Caco-2 (cell line): ENCODE measurements at regions of chr6 and their contacts with region 1.

Region 1: DNA sequence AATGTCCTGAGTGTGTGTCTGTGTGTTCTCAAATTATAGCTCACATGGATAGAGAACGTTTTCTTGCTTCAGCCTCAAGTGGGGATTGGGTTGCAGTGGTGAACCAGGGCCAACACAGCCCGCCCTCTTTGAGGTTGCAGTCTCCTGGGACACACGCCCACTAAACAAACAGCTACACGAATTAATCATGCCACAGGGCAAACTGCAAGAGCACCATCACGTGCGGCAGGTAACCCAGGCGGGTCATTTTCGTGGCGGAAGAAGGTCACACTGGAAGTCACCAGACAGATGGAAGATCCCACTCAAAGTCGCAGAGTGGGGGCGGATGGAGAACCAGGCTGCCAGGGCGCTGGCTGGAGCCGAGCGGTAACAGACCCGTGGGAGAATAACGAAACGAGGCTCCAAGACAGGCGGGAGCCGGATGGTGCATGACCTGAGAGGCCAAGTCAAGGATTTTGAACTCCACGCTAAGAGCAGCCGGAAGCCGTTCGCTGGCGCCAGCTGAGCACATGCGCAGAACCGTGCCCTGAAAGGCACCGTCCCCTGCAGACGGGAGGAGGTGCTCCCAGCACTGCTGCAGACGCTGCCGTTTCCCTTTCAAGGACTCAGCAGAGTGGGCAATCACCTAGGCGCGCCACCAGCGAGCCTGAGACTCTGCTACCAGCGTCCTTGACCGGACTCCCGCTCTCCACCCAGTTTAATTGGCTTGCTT is 10.7 kb downstream of the DLL1 start:
- DNase-seq: peak; percentile 79 to 82
- H3K4me3 ChIP-seq: peak overlapping the region; percentile 32
- H3K4me3 Mint-ChIP-seq: peak overlapping the region; percentile 76
- H3K27ac Mint-ChIP-seq: peak overlapping the region; percentile 67
- H3K4me1 ChIP-seq: 0 out of 2 replicates have a peak, but pooled peaks cover 4% of the 10 kb centered on the region
- H3K4me1 Mint-ChIP-seq: peaks cover 5% of the 10 kb centered on the region
- H3K27me3 ChIP-seq: no peaks in the 10 kb centered on the region
- H3K27me3 Mint-ChIP-seq: no peaks in the 10 kb centered on the region
- CTCF ChIP-seq: no peak

Region 2: DNA sequence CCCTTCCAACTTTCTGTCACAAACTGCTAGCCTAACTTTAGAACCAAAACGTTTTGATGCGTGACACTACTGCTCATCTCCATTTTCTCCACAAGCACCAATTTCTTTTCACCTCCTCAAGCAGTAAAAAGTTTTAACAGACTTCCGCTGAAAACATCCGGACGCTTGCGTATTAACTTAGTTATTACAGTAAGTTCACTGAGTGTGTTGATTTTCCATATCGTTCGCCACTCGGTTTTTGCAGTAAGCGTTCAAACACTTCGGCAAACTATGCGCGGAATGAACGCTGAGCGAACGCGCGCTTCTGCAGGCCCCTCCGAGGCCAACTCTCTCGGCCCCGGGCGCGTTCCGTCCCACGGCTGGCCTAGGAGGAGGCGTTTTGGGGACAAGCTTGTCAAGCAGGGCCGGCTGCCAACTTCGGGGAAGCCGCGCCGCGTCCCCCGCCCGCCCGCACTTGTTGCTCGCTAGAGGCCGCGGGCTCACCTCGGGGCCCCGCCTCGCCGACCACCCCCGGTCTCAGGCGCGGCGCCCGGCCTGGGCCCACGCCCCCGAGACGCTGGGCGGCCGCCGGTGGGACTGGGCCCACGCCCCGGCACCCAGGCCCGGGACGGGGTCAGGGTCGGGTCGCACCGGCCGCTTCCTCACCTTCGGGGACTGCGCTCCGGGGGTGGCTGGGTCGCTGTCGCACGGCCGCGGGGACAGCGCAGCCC is 556.8 kb before region 1 on chr6:
- CTCF ChIA-PET with region 1: no interaction called
- POLR2A ChIA-PET with region 1: no interaction called
- intact Hi-C with region 1: loop called (anchors 5 kb)
- DNase-seq: peak in 1 of 2 experiments; percentile 56
- H3K4me3 ChIP-seq: peak overlapping the region; percentile 77
- H3K4me3 Mint-ChIP-seq: peak overlapping the region; percentile 89
- H3K27ac Mint-ChIP-seq: peak overlapping the region; percentile 75
- H3K4me1 ChIP-seq: peaks cover 22% of the 10 kb centered on the region
- H3K4me1 Mint-ChIP-seq: peaks cover 20% of the 10 kb centered on the region
- H3K27me3 ChIP-seq: no peaks in the 10 kb centered on the region
- H3K27me3 Mint-ChIP-seq: no peaks in the 10 kb centered on the region
- CTCF ChIP-seq: no peak

Region 3: DNA sequence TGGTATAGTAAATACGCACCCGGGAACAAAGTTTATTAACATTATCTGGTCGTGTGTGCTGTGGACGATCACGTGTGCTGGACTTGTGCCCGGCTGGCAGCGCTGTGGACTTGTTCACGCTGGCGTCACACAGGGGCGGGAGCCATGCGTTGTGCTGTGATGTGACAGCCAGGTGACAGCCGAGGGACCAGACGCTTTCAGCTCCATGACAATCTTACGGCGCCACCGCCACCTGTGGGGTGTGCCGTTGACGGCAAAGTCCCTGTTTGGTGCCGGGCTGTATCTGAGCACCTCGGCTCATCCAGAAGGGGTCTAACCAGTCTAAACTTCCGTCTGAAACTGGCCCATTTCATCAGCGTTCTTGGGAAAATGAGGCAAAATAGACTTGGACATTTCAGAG is 14.5 kb before region 1 on chr6:
- CTCF ChIA-PET with region 1: no interaction called
- POLR2A ChIA-PET with region 1: interaction called, 3 read pairs
- intact Hi-C with region 1: loop called (anchors 1 kb)
- DNase-seq: peak; percentile 62
- H3K4me3 ChIP-seq: peak overlapping the region; percentile 9; the same call in 1 of the 2 replicates
- H3K4me3 Mint-ChIP-seq: peak overlapping the region; percentile 64
- H3K27ac Mint-ChIP-seq: peak overlapping the region; percentile 73
- H3K4me1 ChIP-seq: peaks cover 31% of the 10 kb centered on the region
- H3K4me1 Mint-ChIP-seq: peaks cover 32% of the 10 kb centered on the region
- H3K27me3 ChIP-seq: no peaks in the 10 kb centered on the region
- H3K27me3 Mint-ChIP-seq: no peaks in the 10 kb centered on the region
- CTCF ChIP-seq: peak in 1 of 2 experiments; percentile 15

Region 4: DNA sequence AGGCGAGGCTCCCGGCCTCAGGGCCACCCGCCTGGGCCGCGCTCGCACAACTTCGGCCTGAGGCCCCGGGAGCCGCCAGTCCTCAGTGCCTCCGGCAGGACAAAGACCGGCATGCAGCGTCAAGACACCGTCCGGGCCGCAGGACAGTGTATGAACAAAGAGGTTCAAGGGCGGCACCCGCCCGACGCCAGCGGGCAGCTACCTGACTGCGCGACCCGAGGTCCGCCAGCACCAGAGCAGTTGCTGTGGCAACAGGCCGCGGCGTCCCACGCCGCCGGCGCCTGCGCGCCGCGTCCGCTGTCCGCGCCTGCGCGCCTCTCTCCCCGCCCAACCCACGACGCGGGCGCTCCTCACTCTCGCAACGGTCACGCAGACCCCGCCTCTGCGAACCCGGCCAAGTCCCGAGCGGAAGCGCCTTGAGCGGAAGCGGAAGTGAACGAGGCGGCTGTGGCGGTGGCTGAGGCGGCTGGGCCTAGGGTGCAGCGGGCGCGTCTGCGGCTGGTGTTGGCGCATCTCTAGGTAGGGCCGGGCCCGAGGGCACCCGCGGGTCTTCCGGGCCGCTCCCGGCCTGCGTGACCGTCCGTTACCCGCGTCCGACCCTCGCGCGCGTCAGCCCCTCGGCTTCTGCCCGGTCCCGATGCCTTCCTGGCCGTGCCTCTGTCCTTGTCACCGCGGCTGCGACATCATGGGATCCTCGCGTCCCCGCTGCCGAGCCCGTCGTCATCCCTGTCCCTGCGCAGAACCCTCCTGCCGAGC is 26.4 kb after region 1 on chr6 and contains the start of gene FAM120B:
- CTCF ChIA-PET with region 1: no interaction called
- POLR2A ChIA-PET with region 1: no interaction called
- intact Hi-C with region 1: no loop called
- DNase-seq: peak; percentile 93
- H3K4me3 ChIP-seq: peak within 1 kb of the TSS; percentile 91
- H3K4me3 Mint-ChIP-seq: peak within 1 kb of the TSS; percentile 90
- H3K27ac Mint-ChIP-seq: peak within 1 kb of the TSS; percentile 83
- H3K4me1 ChIP-seq: peaks cover 8% of the 10 kb centered on the region; the same call in 1 of the 2 replicates
- H3K4me1 Mint-ChIP-seq: peaks cover 11% of the 10 kb centered on the region
- H3K27me3 ChIP-seq: no peaks in the 10 kb centered on the region
- H3K27me3 Mint-ChIP-seq: no peaks in the 10 kb centered on the region
- CTCF ChIP-seq: no peak
- total RNA-seq, gene FAM120B: 20.9 and 21.0 TPM in 2 replicates

Region 5: GRCh38 chr6:170516783-170517616 is 236.9 kb after region 1 on chr6:
- CTCF ChIA-PET with region 1: no interaction called
- POLR2A ChIA-PET with region 1: no interaction called
- intact Hi-C with region 1: no loop called
- DNase-seq: peak; percentile 65 to 72
- H3K4me3 ChIP-seq: no peak overlapping the region
- H3K4me3 Mint-ChIP-seq: no peak overlapping the region
- H3K27ac Mint-ChIP-seq: no peak overlapping the region
- H3K4me1 ChIP-seq: no peaks in the 10 kb centered on the region
- H3K4me1 Mint-ChIP-seq: no peaks in the 10 kb centered on the region
- H3K27me3 ChIP-seq: no peaks in the 10 kb centered on the region
- H3K27me3 Mint-ChIP-seq: no peaks in the 10 kb centered on the region
- CTCF ChIP-seq: peak; percentile 67 to 86